ENCODE measurements at regions of chr9 and their contacts with region 1.

Region 1: GRCh38 chr9:14616188-14616982 is 76.8 kb downstream of the ZDHHC21 start:
- DNase-seq: peak in 1 of 3 donors; percentile 15
- ATAC-seq: peak; percentile 78
- H3K4me3 ChIP-seq: no peak overlapping the region
- H3K4me1 ChIP-seq: no peaks in the 10 kb centered on the region
- CTCF ChIP-seq: peak; percentile 26

Region 2: GRCh38 chr9:14768405-14769229 is 152.2 kb after region 1 on chr9:
- intact Hi-C with region 1: loop called in 1 of 2 experiments (anchors 2 kb)
- DNase-seq: peak in 1 of 3 donors; percentile 43
- ATAC-seq: peak; percentile 58
- H3K4me3 ChIP-seq: no peak overlapping the region
- H3K4me1 ChIP-seq: no peaks in the 10 kb centered on the region
- CTCF ChIP-seq: peak; percentile 39

Measured in mucosa of descending colon (tissue), 3 donors.